A549 (cell line): ENCODE measurements at regions of chr22 and their contacts with region 1.

Region 1: DNA sequence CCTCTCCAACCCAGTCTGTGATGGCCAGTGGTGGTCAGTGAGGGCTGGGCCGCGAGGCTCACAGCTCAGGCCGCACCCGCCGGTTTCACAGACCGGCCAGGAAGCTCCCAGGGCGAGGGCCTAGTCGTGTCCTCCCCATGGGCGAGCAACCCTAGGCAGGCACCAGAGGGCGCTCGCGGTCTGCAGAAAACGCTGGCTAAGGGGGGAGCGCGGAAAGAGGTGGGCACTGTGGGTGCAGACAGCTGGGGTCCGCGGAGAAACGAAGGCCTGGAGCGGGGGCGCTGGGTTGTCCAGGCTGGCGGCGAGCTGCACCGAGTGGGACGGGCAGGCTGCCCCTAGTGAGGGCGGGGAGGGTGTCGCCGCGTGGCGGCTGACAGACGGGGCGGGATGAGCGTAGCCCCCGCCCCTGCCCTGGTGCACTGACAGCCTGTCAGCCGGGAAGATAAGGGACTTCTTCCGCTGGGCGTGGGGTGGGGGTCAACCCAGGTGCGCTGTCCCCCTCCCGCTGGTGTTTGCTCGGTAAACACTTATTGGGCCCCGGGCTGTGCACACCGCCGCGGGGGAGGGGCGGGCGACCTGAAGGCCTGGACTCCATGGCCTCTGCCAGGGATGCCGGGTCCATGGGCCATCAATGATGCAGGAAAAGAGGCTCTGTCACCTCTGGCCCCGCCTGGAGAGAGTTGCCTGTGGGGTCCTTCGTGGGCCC is 7.5 kb downstream of the GP1BB start:
- DNase-seq: peak; percentile 58 to 73
- ATAC-seq: peak; percentile 80 to 95
- H3K4me3 ChIP-seq: peak overlapping the region; percentile 47
- H3K27ac ChIP-seq: peak overlapping the region; percentile 50 to 79; a peak in 5 of 6 replicates
- H3K4me1 ChIP-seq: no peaks in the 10 kb centered on the region
- CTCF ChIP-seq: peak; percentile 79
- EP300 ChIP-seq: no peak
- POLR2A ChIP-seq: no peak
- RAD21 ChIP-seq: peak; percentile 92 to 97

Region 2: DNA sequence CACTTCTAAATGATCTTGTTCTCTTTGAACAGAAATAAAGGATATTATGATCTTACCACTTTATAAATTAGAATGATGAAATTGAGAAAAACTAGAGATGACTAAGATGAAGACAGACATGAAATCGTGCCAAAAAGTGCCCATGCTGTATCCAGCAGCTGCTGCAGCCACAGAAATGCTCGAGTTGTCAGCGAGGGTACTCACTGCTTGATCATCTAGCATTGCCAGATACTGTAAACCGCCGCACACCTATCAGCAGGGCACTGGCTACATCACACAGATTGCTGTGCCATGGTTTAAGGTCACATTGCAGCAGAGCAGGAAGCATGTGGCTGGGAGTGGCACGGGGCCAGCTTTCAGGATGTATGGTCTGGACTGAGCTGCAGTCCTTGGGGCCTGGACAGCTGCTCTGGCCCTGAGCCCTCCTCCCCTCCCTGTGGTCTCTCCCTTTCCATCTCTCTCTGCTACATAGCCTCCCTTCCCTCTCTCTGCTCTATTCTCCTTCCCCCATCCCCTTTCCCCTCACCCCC is 67.5 kb before region 1 on chr22:
- CTCF ChIA-PET with region 1: no interaction called
- POLR2A ChIA-PET with region 1: no interaction called
- DNase-seq: no peak
- ATAC-seq: peak in 1 of 2 experiments; percentile 65; a peak in 3 of 6 replicates
- H3K4me3 ChIP-seq: no peak overlapping the region
- H3K27ac ChIP-seq: peak overlapping the region in 1 of 2 experiments; percentile 33; a peak in 1 of 6 replicates
- H3K4me1 ChIP-seq: peaks cover 5% of the 10 kb centered on the region; the same call in 1 of the 3 replicates
- CTCF ChIP-seq: no peak
- EP300 ChIP-seq: no peak
- POLR2A ChIP-seq: no peak
- RAD21 ChIP-seq: no peak

Region 3: DNA sequence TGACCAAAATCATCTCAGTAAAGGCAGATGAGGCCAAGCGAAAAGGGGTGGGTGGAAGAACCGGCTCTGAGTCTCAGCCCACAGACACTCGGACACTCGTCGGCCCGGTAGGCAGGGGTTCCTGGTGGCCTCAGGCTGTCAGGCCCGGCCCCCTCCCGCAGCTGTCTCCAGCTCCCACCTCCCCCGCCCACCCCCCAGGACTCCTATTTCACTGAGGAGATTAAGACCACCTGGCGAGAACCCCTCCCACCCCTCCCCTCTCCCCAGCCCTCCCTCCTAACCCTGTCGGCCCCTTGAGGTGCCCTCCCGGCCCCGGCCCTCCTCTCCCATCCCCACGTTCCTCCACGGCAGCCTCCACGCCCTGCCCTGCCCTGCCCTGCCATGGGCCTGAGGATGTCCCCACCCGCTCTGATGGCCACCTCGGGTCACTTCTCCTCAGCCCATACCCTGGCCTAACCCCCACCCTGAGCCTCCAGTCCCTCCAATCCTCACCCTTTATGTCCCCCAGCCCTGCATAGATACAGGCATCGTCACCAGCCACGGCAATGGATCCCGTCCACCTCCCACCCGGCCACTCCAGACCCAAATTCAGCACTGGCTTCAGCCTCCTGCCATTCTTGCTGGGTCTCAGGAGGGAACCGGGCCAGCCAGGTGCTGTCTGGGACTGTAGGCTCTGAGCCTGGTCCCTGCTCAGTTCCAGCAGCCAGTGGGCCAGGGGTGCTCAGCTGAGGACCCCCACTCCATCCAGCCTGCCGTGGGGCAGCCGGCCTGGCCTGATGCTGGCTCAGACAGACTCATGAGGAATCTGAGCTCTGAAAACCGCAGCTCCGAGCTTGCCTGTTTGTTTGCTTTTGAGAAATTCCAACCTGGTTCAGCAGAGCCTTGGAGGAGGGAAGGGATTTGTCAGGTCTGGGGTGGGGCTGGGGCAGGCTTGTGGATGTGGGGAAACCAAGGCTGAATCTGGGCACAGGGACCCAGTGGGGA is 20.0 kb after region 1 on chr22:
- CTCF ChIA-PET with region 1: interaction called, 86 read pairs
- POLR2A ChIA-PET with region 1: no interaction called
- DNase-seq: peak in 1 of 2 experiments; percentile 34
- ATAC-seq: peak in 1 of 2 experiments; percentile 65; a peak in 3 of 6 replicates
- H3K4me3 ChIP-seq: no peak overlapping the region
- H3K27ac ChIP-seq: peak overlapping the region; percentile 46 to 82; a peak in 5 of 6 replicates
- H3K4me1 ChIP-seq: peaks cover 18% of the 10 kb centered on the region
- CTCF ChIP-seq: no peak
- EP300 ChIP-seq: no peak
- POLR2A ChIP-seq: no peak
- RAD21 ChIP-seq: no peak

Region 4: GRCh38 chr22:19806213-19807145 is 75.7 kb after region 1 on chr22:
- CTCF ChIA-PET with region 1: interaction called, 11 read pairs
- POLR2A ChIA-PET with region 1: no interaction called
- DNase-seq: peak; percentile 42 to 50
- ATAC-seq: peak; percentile 59 to 70
- H3K4me3 ChIP-seq: no peak overlapping the region
- H3K27ac ChIP-seq: peak overlapping the region; percentile 47 to 77; a peak in 5 of 6 replicates
- H3K4me1 ChIP-seq: peaks cover 15% of the 10 kb centered on the region
- CTCF ChIP-seq: no peak
- EP300 ChIP-seq: no peak
- POLR2A ChIP-seq: no peak
- RAD21 ChIP-seq: no peak

Region 5: DNA sequence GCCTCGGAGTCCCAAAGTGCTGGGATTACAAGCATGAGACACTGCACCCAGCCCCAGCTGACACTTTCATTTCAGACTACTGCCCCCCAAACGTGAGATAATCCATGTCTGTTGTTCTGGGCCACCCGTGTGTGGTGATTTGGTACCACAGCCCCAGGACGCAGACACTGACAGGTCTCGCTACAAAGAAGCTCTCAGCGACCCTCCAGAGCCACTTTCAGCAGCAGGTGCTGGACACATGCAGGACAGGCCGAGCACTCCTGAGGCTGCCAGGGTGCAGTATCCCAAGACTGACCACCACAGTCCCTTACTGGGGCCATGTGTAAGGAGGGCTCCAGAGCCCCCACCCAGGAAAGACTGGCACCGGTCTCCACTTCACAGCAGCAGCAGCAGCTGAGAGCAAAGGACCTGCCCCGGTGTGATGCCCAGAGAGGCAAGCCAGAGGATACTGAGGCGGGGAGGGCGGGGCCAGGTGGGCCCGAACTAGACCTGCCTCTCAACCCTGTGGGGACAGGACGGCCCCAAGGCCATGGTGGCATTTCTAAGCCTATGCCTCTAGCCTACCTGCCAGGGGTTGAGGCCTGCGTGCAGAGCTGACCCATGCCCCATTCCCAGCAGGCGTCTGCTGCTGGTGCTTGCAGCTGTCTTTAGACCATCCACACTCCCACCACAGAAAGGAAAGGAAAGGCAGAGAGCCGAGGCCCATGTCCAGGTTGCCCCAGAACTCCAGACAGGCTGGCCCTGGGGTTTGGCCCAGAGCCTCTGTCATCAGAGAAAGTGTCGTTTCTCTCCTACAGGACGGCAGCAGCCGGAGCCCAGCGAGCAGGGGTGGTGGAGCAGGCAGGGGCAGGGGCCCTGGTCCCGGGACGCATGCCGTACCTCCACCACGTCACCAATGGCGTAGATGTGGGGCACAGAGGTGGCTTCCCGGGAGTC is 151.9 kb after region 1 on chr22:
- CTCF ChIA-PET with region 1: interaction called, 25 read pairs
- POLR2A ChIA-PET with region 1: no interaction called
- DNase-seq: no peak
- ATAC-seq: no peak
- H3K4me3 ChIP-seq: no peak overlapping the region
- H3K27ac ChIP-seq: peak overlapping the region; percentile 92 to 94
- H3K4me1 ChIP-seq: peaks cover 52% of the 10 kb centered on the region
- CTCF ChIP-seq: no peak
- EP300 ChIP-seq: no peak
- POLR2A ChIP-seq: no peak
- RAD21 ChIP-seq: no peak

Region 6: DNA sequence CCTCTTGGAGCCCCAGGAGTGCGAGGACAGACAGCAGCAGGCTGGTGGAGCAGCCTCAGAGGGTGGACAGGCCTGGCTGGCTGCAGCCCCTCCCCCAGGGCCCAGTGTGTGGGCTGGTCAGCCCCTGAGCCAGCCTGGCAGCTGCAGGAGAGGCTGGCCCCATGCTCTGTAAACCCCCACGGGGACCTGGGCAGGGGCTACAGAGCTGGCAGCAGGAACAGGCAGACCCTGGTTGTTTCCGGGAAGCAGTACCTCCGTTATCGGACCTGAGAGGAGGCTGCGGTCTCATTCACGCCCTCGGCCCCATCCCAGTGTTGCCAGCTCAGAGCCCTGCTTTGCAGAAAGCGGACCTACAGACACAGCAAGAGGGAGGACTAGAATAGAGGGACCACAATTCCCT is 172.2 kb after region 1 on chr22:
- CTCF ChIA-PET with region 1: interaction called, 56 read pairs
- POLR2A ChIA-PET with region 1: no interaction called
- DNase-seq: no peak
- ATAC-seq: no peak
- H3K4me3 ChIP-seq: no peak overlapping the region
- H3K27ac ChIP-seq: no peak overlapping the region
- H3K4me1 ChIP-seq: no peaks in the 10 kb centered on the region
- CTCF ChIP-seq: no peak
- EP300 ChIP-seq: no peak
- POLR2A ChIP-seq: no peak
- RAD21 ChIP-seq: no peak

Region 7: DNA sequence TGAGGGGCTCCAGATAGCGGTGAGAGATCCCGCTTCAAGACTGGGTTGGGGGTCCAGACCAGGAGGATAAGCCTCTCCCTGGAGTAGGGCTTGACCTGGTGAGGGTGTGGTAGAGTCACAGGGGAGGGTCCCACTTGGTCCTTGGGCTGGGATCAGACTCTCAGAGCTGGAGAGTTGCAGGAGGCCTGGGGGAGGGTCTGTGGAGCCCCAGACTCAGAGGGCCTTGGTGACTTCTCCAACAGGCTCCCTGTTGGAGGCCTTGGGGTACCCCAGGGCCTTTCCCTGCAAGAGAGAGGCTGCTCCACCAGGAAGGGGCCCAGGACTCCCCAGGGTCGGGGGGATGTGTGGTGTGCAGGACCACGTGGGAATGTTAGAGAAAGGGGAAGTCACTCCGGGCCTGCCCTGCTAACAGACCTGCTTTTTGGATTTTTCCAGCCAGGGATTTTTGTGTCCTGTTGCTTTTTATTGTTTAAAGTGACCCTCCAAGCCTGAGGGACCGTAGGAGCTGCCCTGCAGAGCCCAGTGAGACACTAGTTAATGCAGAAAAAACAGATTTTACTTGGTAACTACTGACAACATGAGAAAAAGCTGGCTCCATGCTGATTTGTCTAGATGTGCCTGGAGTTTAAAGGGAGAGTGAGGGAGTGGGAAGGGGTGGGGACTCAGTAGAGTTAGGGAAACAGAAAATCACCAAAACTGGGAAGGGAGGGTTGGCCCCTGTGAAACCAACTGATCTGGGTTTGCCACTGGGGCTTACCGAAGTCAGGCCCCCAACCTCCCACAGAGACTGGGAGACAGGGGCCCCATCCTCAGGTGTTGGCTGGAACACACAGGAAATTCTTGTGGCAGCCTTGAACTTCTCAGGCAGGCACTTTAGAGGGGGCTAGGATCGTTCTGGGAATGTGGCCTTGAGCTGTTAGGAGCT is 211.6 kb after region 1 on chr22:
- CTCF ChIA-PET with region 1: interaction called, 13 read pairs
- POLR2A ChIA-PET with region 1: no interaction called
- DNase-seq: peak; percentile 18 to 22
- ATAC-seq: peak; percentile 55 to 68; a peak in 5 of 6 replicates
- H3K4me3 ChIP-seq: peak overlapping the region; percentile 91
- H3K27ac ChIP-seq: peak overlapping the region; percentile 99 to 100
- H3K4me1 ChIP-seq: peaks cover 27% of the 10 kb centered on the region
- CTCF ChIP-seq: no peak
- EP300 ChIP-seq: no peak
- POLR2A ChIP-seq: no peak
- RAD21 ChIP-seq: no peak

Region 8: DNA sequence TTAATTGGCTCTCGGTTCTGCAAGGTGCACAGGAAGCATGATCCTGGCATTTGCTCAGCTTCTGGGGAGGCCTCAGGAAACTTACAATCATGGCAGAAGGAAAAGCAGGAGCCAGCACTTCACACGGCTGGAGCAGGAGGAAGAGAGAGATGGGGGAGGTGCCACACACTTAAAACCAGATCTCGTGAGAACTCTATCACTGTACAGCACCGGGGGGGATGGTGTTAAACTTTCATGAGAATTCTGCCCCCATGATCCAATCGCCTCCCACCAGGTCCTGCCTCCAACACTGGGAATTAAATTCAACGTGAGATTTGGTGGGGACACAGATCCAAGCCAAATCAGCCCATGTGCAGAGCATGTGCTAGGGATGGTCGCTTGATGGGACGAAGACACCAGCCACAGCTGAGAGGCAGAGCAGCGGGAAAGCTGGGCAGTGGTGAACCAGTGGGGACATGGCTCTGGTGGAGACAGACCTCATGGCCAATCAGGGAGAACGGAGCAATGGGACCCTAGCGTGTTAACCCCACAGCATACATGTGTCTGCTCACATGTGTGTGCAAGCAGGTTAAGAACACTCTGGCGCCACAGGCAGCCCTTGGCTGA is 296.3 kb after region 1 on chr22:
- CTCF ChIA-PET with region 1: no interaction called
- POLR2A ChIA-PET with region 1: no interaction called
- DNase-seq: no peak
- ATAC-seq: no peak
- H3K4me3 ChIP-seq: no peak overlapping the region
- H3K27ac ChIP-seq: no peak overlapping the region
- H3K4me1 ChIP-seq: peaks cover 2% of the 10 kb centered on the region; the same call in 2 of the 3 replicates
- CTCF ChIP-seq: no peak
- EP300 ChIP-seq: no peak
- POLR2A ChIP-seq: no peak
- RAD21 ChIP-seq: no peak

Region 9: GRCh38 chr22:20079745-20080444 is 349.1 kb after region 1 on chr22 and contains the start of gene DGCR8:
- CTCF ChIA-PET with region 1: no interaction called
- POLR2A ChIA-PET with region 1: no interaction called
- DNase-seq: peak; percentile 81 to 91
- ATAC-seq: peak; percentile 91 to 96
- H3K4me3 ChIP-seq: peak within 1 kb of the TSS; percentile 61
- H3K27ac ChIP-seq: peak within 1 kb of the TSS; percentile 96 to 100
- H3K4me1 ChIP-seq: peaks cover 16% of the 10 kb centered on the region; the same call in 2 of the 3 replicates
- CTCF ChIP-seq: no peak
- EP300 ChIP-seq: no peak
- POLR2A ChIP-seq: peak; percentile 92
- RAD21 ChIP-seq: no peak
- polyA plus RNA-seq, gene DGCR8: 18.1 and 18.7 TPM in 2 replicates